AG04450 (cell line): ENCODE measurements at regions of chr7 and their contacts with region 1.

Region 1: GRCh38 chr7:127514499-127514898 is 70.9 kb downstream of the GCC1 start:
- DNase-seq: peak; percentile 24
- H3K4me3 ChIP-seq: no peak overlapping the region
- H3K27ac ChIP-seq: no peak overlapping the region
- H3K27me3 ChIP-seq: no peaks in the 10 kb centered on the region
- CTCF ChIP-seq: peak; percentile 51

Region 2: DNA sequence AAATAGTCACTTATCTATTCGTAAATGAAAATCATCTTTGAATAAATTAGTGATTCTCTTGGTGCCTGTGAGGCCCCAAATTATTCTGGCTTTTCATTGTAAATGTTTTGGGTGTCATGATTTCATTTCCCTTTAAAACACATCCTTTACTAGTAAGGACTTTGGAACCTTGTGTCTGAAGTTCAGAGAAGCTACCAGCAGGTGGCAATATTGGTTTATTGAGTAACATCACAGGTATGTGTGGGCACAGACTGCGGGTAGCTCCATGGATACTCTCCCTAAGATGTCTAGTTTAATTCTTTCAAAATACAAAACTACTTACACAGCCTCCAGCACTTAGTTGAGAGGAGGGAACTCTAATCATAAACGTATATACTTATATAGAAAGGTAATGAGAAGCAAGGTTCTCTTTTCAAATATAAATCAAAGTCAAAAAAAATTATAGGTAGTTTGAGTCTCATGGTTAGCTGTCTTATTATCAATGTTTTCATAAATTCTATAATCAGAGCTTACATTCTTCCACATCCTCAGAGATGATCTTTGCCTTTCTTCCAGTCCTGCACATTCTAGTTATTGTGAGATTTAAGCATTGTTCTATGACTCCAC is 711.3 kb before region 1 on chr7:
- CTCF ChIA-PET with region 1: interaction called, 16 read pairs
- POLR2A ChIA-PET with region 1: no interaction called
- DNase-seq: peak; percentile 2
- H3K4me3 ChIP-seq: no peak overlapping the region
- H3K27ac ChIP-seq: no peak overlapping the region
- H3K27me3 ChIP-seq: no peaks in the 10 kb centered on the region
- CTCF ChIP-seq: peak; percentile 54

Region 3: GRCh38 chr7:127702938-127703337 is 188.4 kb after region 1 on chr7:
- CTCF ChIA-PET with region 1: no interaction called
- POLR2A ChIA-PET with region 1: no interaction called
- DNase-seq: no peak
- H3K4me3 ChIP-seq: no peak overlapping the region
- H3K27ac ChIP-seq: no peak overlapping the region
- H3K27me3 ChIP-seq: no peaks in the 10 kb centered on the region
- CTCF ChIP-seq: no peak

Region 4: DNA sequence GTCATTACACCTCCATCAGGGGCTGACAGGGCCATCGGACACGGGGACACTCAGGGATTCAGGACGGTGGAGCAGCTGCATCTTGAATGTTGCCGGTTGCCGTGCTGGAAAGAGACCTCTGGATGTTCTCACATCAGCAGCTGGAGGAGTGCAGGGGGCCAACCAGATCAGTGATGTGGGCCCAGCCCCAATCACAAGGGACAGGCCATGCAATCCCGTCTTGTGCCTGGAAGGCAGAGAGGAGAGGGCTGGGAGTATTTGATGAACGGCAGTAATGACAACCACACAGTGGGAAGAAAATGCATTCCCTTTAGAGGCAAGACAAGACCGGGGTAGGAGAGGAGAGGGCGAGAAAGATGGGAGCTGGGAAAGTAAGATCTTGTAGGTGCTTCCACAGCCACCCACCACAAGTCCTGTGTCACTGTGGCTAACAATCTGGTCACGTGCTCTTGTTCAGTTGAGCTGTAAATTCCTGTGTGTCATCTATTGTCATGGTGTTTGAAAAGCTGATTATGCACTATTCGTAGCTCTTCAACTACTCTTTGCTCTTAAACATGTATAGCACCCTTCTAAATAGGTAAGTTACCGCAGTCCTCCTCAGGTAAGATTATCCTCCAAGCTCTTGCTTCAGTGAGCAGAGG is 640.7 kb after region 1 on chr7:
- CTCF ChIA-PET with region 1: no interaction called
- POLR2A ChIA-PET with region 1: no interaction called
- DNase-seq: no peak
- H3K4me3 ChIP-seq: no peak overlapping the region
- H3K27ac ChIP-seq: no peak overlapping the region
- H3K27me3 ChIP-seq: peaks cover 62% of the 10 kb centered on the region
- CTCF ChIP-seq: no peak